ENCODE measurements at regions of chr12 and their contacts with region 1.

Region 1: GRCh38 chr12:93699271-93700145 is 22.3 kb downstream of the CRADD start:
- H3K4me3 ChIP-seq: no peak overlapping the region
- H3K27ac ChIP-seq: 0 out of 2 replicates have a peak overlapping the region, but pooled peaks have one; percentile 25
- H3K4me1 ChIP-seq: peaks cover 16% of the 10 kb centered on the region
- CTCF ChIP-seq: no peak

Region 2: GRCh38 chr12:93476555-93476954 is 223.0 kb before region 1 on chr12:
- CTCF ChIA-PET with region 1: no interaction called
- POLR2A ChIA-PET with region 1: interaction called, 11 read pairs
- H3K4me3 ChIP-seq: no peak overlapping the region
- H3K27ac ChIP-seq: no peak overlapping the region
- H3K4me1 ChIP-seq: no peaks in the 10 kb centered on the region
- CTCF ChIP-seq: no peak

Region 3: GRCh38 chr12:93766796-93767523 is 67.5 kb after region 1 on chr12:
- CTCF ChIA-PET with region 1: no interaction called
- POLR2A ChIA-PET with region 1: no interaction called
- H3K4me3 ChIP-seq: no peak overlapping the region
- H3K27ac ChIP-seq: no peak overlapping the region
- H3K4me1 ChIP-seq: no peaks in the 10 kb centered on the region; the same call in 1 of the 2 replicates
- CTCF ChIP-seq: peak; percentile 29; the same call in 1 of the 2 replicates

Region 4: DNA sequence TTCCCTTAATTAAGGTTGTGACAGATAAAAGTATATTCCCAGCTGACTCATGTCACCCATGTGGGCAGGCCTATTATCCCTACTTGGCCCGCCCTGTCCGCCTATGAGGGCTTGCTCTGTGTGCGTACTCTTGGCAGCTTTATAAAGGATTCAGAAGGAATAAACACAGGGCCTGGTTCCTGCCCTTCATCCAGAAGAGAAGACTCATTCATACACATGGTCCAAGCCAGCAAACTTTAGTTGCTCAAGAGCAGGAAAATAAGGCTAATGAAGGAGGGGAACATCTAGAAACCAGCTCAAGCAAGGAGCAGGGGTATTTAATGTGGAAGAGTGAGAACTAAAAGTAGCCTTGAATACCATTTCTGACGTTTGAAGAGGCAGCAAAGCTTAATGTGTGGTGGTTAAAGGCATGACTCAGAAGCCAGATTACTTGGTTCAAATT is 119.6 kb after region 1 on chr12:
- CTCF ChIA-PET with region 1: no interaction called
- POLR2A ChIA-PET with region 1: no interaction called
- H3K4me3 ChIP-seq: no peak overlapping the region
- H3K27ac ChIP-seq: no peak overlapping the region
- H3K4me1 ChIP-seq: peaks cover 4% of the 10 kb centered on the region
- CTCF ChIP-seq: no peak